Transverse colon (tissue), 4 donors: ENCODE measurements at regions of chr1 and their contacts with region 1.

Region 1: DNA sequence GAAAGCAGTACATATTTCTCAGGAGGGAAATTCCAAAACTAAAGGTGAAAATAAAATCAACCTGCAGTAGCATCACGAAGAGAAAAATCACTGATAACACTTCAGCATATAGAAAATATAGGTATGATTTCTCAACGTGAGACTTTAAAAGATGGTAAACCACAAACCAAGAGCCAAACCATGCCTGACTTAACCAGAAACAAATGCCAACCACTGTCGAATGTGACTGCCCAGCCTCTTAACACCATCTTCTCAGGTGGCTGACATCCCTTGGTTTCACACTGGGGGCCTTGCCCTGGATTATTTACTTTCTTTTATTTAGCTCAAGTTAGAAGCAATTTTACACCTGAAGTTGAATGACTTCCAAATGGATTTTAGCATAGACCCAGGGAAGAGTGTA is 10.1 kb downstream of the HMGCS2 start:
- DNase-seq: no peak
- H3K4me3 ChIP-seq: no peak overlapping the region
- H3K27ac ChIP-seq: no peak overlapping the region
- H3K4me1 ChIP-seq: no peaks in the 10 kb centered on the region
- H3K27me3 ChIP-seq: no peaks in the 10 kb centered on the region
- CTCF ChIP-seq: no peak
- EP300 ChIP-seq: no peak
- POLR2A ChIP-seq: no peak

Region 2: DNA sequence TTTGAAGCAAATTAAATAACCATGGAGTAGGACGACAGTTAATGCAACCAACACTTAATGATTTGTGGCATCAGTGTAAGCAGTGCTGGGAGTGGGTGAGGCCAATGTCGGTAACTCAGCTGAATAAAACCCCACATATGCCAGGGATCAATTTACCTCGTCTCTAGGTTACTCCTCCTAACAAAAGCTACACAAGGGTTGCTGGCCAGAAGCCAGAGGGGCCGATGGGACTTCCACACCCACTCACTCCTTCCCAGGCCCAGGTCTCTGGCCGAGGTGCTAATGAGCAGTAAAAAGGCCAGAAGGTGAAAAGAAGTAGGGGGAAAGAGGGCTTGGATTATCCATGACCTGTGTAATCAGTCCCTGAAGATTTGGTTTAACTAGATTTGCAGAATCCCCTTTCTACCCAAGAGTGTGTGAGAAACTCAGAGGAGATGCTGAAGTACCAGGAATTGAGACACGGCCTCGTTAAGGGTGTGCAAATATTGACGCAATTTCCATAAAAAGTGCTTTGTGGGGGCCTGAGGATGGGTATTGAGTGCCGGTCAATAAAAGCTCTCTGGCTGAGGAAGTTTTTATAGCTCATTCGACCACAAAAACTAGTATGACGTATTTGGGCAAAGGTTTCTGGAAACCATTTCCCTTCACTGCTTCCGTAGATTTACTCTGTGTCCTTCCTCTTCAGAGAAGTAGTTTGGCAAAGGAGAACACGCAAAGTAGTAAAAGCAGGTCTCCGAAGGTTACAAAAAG is 916.0 kb before region 1 on chr1:
- in situ Hi-C with region 1: no loop called
- intact Hi-C with region 1: no loop called
- DNase-seq: no peak
- H3K4me3 ChIP-seq: no peak overlapping the region
- H3K27ac ChIP-seq: no peak overlapping the region
- H3K4me1 ChIP-seq: no peaks in the 10 kb centered on the region
- H3K27me3 ChIP-seq: no peaks in the 10 kb centered on the region
- CTCF ChIP-seq: no peak
- EP300 ChIP-seq: no peak
- POLR2A ChIP-seq: no peak

Region 3: GRCh38 chr1:119808972-119809550 is 50.5 kb after region 1 on chr1:
- in situ Hi-C with region 1: loop called in 1 of 4 experiments (anchors 10 kb)
- intact Hi-C with region 1: no loop called
- DNase-seq: peak; percentile 85
- H3K4me3 ChIP-seq: no peak overlapping the region
- H3K27ac ChIP-seq: no peak overlapping the region
- H3K4me1 ChIP-seq: peaks cover under 1 to 14% (median 4%) of the 10 kb centered on the region in 4 donors
- H3K27me3 ChIP-seq: no peaks in the 10 kb centered on the region
- CTCF ChIP-seq: peak; percentile 80 to 91 (median 85)
- EP300 ChIP-seq: no peak
- POLR2A ChIP-seq: no peak

Region 4: GRCh38 chr1:119948342-119949214 is 190.0 kb after region 1 on chr1:
- in situ Hi-C with region 1: loop called in 1 of 4 experiments (anchors 10 kb)
- intact Hi-C with region 1: no loop called
- DNase-seq: peak; percentile 82
- H3K4me3 ChIP-seq: no peak overlapping the region
- H3K27ac ChIP-seq: no peak overlapping the region
- H3K4me1 ChIP-seq: no peaks in the 10 kb centered on the region
- H3K27me3 ChIP-seq: no peaks in the 10 kb centered on the region
- CTCF ChIP-seq: peak; percentile 66 to 81 (median 79)
- EP300 ChIP-seq: no peak
- POLR2A ChIP-seq: no peak